SK-N-SH (cell line): ENCODE measurements at regions of chr17 and their contacts with region 1.

Region 1: GRCh38 chr17:79087428-79088143 is 13.0 kb downstream of the ENGASE start:
- DNase-seq: peak; percentile 97
- H3K4me3 ChIP-seq: no peak overlapping the region; a peak in 1 of 4 replicates
- H3K27ac ChIP-seq: no peak overlapping the region
- H3K4me1 ChIP-seq: peaks cover 0 to 9% of the 10 kb centered on the region in 2 experiments; a peak in 1 of 4 replicates
- H3K27me3 ChIP-seq: no peaks in the 10 kb centered on the region
- CTCF ChIP-seq: peak; percentile 97
- EP300 ChIP-seq: no peak
- RAD21 ChIP-seq: peak; percentile 96

Region 2: GRCh38 chr17:78665952-78666920 is 421.4 kb before region 1 on chr17:
- CTCF ChIA-PET with region 1: no interaction called
- POLR2A ChIA-PET with region 1: no interaction called
- DNase-seq: no peak
- H3K4me3 ChIP-seq: no peak overlapping the region
- H3K27ac ChIP-seq: peak overlapping the region in 1 of 2 experiments; percentile 5; a peak in 1 of 4 replicates
- H3K4me1 ChIP-seq: peaks cover 0 to 14% of the 10 kb centered on the region in 2 experiments; a peak in 1 of 4 replicates
- H3K27me3 ChIP-seq: no peaks in the 10 kb centered on the region
- CTCF ChIP-seq: no peak
- EP300 ChIP-seq: no peak
- RAD21 ChIP-seq: no peak

Region 3: DNA sequence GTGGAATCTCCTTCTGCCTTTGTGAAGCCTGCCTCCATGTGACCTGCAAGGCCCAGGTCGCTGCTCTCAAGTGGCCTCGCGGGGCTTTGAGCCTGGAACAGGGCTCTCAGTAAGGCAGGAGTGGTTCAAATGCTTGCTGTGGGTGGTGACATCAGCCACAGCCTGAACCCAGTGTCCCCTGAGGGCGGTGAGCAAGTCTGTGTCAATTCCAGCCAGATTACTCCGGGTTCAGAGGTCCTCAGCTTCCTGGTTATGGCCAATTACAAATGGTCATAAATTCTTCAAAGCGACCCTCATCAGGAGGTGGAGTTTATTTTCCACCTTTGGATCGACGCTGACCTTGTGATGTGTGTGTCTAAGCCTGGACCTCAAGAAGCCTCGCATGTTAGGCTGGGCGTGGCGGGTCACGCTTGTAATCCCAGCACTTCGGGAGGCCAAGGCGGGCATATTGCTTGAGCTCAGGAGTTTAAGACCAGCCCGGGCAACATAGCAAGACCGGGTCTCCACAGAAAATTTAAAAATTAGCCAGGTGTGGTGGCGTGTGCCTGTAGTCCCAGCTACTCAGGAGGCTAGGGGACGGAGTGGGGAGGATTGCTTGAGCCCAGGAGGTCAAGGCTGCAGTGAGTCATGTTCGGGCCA is 125.1 kb before region 1 on chr17:
- CTCF ChIA-PET with region 1: no interaction called
- POLR2A ChIA-PET with region 1: no interaction called
- DNase-seq: peak; percentile 39
- H3K4me3 ChIP-seq: no peak overlapping the region
- H3K27ac ChIP-seq: no peak overlapping the region
- H3K4me1 ChIP-seq: peaks cover 0 to 8% of the 10 kb centered on the region in 2 experiments; a peak in 1 of 4 replicates
- H3K27me3 ChIP-seq: no peaks in the 10 kb centered on the region
- CTCF ChIP-seq: no peak
- EP300 ChIP-seq: no peak
- RAD21 ChIP-seq: no peak

Region 4: GRCh38 chr17:79027925-79028813 is 59.4 kb before region 1 on chr17:
- CTCF ChIA-PET with region 1: interaction called, 86 read pairs
- POLR2A ChIA-PET with region 1: interaction called, 7 read pairs
- DNase-seq: peak; percentile 92
- H3K4me3 ChIP-seq: peak overlapping the region in 1 of 2 experiments; percentile 19; a peak in 1 of 4 replicates
- H3K27ac ChIP-seq: peak overlapping the region; percentile 51 to 92; a peak in 3 of 4 replicates
- H3K4me1 ChIP-seq: peaks cover 33 to 59% of the 10 kb centered on the region in 2 experiments
- H3K27me3 ChIP-seq: no peaks in the 10 kb centered on the region
- CTCF ChIP-seq: peak; percentile 56
- EP300 ChIP-seq: peak; percentile 32 to 88; a peak in 3 of 4 replicates
- RAD21 ChIP-seq: peak; percentile 28

Region 5: GRCh38 chr17:79126139-79126538 is 38.6 kb after region 1 on chr17:
- CTCF ChIA-PET with region 1: interaction called, 80 read pairs
- POLR2A ChIA-PET with region 1: no interaction called
- DNase-seq: peak; percentile 87
- H3K4me3 ChIP-seq: no peak overlapping the region
- H3K27ac ChIP-seq: no peak overlapping the region
- H3K4me1 ChIP-seq: peaks cover 0 to 17% of the 10 kb centered on the region in 2 experiments; a peak in 1 of 4 replicates
- H3K27me3 ChIP-seq: peaks cover 68% of the 10 kb centered on the region
- CTCF ChIP-seq: peak; percentile 31
- EP300 ChIP-seq: no peak
- RAD21 ChIP-seq: peak; percentile 65

Region 6: GRCh38 chr17:79174905-79175856 is 87.6 kb after region 1 on chr17:
- CTCF ChIA-PET with region 1: interaction called, 30 read pairs
- POLR2A ChIA-PET with region 1: no interaction called
- DNase-seq: no peak
- H3K4me3 ChIP-seq: no peak overlapping the region
- H3K27ac ChIP-seq: no peak overlapping the region
- H3K4me1 ChIP-seq: peaks cover 0 to 6% of the 10 kb centered on the region in 2 experiments; a peak in 1 of 4 replicates
- H3K27me3 ChIP-seq: peaks cover 41% of the 10 kb centered on the region
- CTCF ChIP-seq: no peak
- EP300 ChIP-seq: no peak
- RAD21 ChIP-seq: no peak

Region 7: GRCh38 chr17:79255926-79256585 is 168.5 kb after region 1 on chr17:
- CTCF ChIA-PET with region 1: interaction called, 10 read pairs
- POLR2A ChIA-PET with region 1: no interaction called
- DNase-seq: no peak
- H3K4me3 ChIP-seq: no peak overlapping the region
- H3K27ac ChIP-seq: no peak overlapping the region
- H3K4me1 ChIP-seq: peaks cover 0 to 52% of the 10 kb centered on the region in 2 experiments; a peak in 2 of 4 replicates
- H3K27me3 ChIP-seq: peaks cover 35% of the 10 kb centered on the region
- CTCF ChIP-seq: no peak
- EP300 ChIP-seq: no peak
- RAD21 ChIP-seq: no peak

Region 8: GRCh38 chr17:79400989-79401703 is 313.6 kb after region 1 on chr17:
- CTCF ChIA-PET with region 1: interaction called, 1,305 read pairs
- POLR2A ChIA-PET with region 1: no interaction called
- DNase-seq: peak; percentile 94
- H3K4me3 ChIP-seq: peak overlapping the region; percentile 34 to 55
- H3K27ac ChIP-seq: no peak overlapping the region
- H3K4me1 ChIP-seq: peaks cover 0 to 8% of the 10 kb centered on the region in 2 experiments; a peak in 1 of 4 replicates
- H3K27me3 ChIP-seq: peaks cover 55% of the 10 kb centered on the region
- CTCF ChIP-seq: peak; percentile 97
- EP300 ChIP-seq: no peak
- RAD21 ChIP-seq: peak; percentile 67